ENCODE measurements at regions of chr10 and their contacts with region 1.

Region 1: DNA sequence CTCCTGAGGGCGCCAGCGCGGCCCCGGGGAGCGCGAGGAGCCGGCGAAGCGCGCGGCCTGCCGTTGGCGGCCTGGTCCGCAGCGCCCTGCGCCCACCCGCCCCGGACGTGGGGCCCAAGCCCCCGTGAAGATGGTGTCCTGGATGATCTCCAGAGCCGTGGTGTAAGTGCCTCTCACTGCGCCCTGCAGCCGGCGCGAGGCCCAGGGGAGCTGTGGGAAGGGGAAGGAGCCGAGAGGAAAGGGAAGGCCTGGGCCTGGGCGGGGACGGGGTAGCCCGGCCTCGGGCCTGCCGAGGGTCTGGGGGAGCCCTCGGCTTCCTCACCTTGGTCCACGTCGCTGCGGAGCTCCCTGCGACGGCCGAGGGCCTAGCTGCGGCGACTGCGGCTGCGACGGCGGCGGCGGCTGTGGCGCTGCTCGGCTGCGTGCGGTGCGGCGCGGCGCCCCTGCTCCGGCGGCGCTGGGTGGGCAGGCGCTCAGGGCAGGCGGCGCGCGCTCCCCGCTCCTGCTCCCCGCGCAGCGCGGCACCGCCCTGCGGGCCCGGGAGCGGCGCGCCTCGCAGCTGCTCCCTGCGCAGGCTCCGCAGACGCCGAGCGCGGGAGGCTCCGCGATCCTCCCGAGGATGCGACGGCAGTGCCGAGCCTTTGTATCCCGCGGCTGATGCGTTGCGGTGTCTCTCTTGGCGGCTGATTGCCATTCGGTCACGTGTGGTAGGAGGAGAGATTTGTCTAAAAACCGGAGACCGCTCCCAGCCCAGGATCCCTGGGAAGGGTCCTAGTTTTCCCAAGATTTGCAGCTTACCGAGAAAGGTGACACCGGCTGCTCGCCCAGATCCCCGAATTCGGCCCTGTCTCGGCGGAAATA is 445 bp downstream of the REEP3 start:
- DNase-seq: no peak
- H3K4me3 ChIP-seq: peak overlapping the region; percentile 81 to 91 (median 88)
- H3K27ac ChIP-seq: peak overlapping the region; percentile 99 to 100 (median 99)
- H3K4me1 ChIP-seq: peaks cover 42 to 74% (median 71%) of the 10 kb centered on the region in 4 donors
- H3K27me3 ChIP-seq: no peaks in the 10 kb centered on the region
- CTCF ChIP-seq: peak in 1 of 3 experiments; percentile 5
- EP300 ChIP-seq: no peak
- POLR2A ChIP-seq: no peak

Region 2: DNA sequence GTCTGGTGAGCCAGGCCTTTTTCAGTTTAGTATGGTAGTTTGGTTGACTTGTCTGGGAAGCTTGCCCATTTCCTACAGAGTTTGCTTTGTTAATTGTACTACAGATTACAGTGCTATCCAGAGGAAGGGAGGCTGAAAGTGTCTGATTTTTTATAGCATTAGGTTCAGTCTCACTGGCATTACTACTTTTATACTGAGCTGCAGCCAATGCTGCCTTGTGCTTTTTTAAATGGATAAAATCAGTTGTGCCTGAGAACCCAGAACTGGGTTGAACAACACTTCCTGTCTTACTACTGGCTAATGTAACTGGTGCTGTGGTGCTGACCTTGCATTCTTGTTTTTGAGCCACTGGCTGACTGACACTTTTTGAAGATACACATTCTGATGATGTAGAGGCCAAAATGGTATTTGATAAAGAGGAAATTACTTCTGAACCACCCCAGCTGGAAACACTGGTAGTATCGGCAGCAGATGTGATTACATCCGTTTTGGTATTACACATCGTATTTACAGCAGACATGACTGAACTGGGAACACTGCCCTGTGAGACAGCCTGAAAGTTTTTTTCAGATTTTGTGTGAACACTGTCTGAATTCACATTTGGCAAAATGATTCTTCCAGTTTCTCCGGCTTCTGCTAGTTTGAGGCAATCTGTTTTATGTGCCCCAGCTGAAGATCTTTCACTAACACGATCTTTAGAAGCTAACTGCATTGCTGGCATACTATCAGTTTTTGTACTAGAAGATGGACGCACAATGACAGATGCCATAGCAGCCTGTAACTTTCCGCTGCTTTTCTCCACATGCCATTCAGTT is 314.4 kb before region 1 on chr10:
- intact Hi-C with region 1: loop called (anchors 5 kb)
- DNase-seq: no peak
- H3K4me3 ChIP-seq: peak overlapping the region; percentile 4 to 34 (median 27)
- H3K27ac ChIP-seq: peak overlapping the region; percentile 56 to 77 (median 70)
- H3K4me1 ChIP-seq: peaks cover 52 to 65% (median 60%) of the 10 kb centered on the region in 4 donors
- H3K27me3 ChIP-seq: no peaks in the 10 kb centered on the region
- CTCF ChIP-seq: no peak
- EP300 ChIP-seq: no peak
- POLR2A ChIP-seq: no peak

Region 3: DNA sequence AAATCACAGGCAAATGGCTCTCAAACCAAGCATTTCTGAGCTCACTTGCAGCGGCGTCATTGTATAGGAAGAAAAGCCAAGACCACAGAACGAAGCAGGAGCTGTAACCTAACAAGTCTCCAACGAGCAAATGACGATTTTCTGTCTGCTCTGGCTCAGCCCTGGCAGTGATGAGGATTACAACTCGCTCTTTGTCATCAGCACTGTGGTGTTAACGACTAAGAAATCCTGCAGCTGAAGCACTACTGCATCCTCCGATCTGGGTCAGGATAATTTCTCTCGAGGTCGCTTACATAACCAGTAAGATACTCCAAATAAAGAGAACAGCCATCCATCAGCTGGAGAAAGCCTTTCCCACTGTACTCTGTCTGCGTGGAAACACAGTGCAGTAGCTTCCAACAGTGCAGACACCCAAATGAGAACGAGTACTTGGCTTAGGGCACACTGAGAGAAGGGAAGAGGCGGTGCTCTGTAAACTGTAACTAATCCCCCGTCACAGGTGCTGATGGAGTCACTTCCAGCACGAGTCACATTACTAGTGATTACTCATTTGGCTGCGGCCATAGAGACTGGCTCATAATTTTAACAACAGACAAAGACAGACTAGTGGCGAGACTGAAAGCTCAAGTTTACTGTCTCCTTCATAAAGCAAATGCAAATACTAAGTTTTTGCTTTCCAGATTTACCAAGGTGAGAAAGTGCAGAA is 252.7 kb before region 1 on chr10:
- intact Hi-C with region 1: loop called (anchors 5 kb)
- DNase-seq: peak; percentile 97
- H3K4me3 ChIP-seq: peak overlapping the region; percentile 46 to 61 (median 58)
- H3K27ac ChIP-seq: peak overlapping the region; percentile 81 to 88 (median 86)
- H3K4me1 ChIP-seq: peaks cover 24 to 37% (median 26%) of the 10 kb centered on the region in 4 donors
- H3K27me3 ChIP-seq: no peaks in the 10 kb centered on the region
- CTCF ChIP-seq: peak; percentile 32 to 44 (median 43)
- EP300 ChIP-seq: no peak
- POLR2A ChIP-seq: peak; percentile 70

Region 4: DNA sequence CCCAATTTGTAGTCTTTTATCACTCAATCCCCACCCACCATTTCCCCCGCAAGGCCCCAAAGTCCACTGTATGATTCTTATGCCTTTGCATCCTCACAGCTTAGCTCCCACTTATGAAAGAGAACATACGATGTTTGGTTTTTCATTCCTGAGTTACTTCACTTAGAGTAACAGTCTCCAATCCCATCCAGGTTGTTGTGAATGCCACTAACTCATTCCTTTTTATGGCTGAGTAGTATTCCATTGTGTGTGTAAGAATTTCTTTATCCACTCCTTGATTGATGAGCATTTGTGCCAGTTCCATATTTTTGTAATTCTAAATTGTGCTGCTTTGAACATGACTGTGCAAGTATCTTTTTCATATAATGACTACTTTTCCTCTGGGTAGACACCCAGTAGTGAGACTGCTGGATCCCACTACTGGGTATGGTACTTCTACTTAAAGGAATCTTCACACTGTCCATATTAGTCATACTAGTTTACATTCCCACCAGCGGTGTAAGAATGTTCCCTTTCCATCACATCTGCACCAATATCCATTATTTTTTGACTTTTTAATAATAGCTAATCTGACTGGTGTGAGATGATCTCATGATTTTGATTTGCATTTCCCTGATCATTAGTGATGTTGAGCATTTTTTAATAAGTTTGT is 208.5 kb before region 1 on chr10:
- intact Hi-C with region 1: no loop called
- DNase-seq: no peak
- H3K4me3 ChIP-seq: no peak overlapping the region
- H3K27ac ChIP-seq: no peak overlapping the region
- H3K4me1 ChIP-seq: peaks cover 8 to 16% (median 12%) of the 10 kb centered on the region in 4 donors
- H3K27me3 ChIP-seq: no peaks in the 10 kb centered on the region
- CTCF ChIP-seq: no peak
- EP300 ChIP-seq: no peak
- POLR2A ChIP-seq: no peak

Region 5: DNA sequence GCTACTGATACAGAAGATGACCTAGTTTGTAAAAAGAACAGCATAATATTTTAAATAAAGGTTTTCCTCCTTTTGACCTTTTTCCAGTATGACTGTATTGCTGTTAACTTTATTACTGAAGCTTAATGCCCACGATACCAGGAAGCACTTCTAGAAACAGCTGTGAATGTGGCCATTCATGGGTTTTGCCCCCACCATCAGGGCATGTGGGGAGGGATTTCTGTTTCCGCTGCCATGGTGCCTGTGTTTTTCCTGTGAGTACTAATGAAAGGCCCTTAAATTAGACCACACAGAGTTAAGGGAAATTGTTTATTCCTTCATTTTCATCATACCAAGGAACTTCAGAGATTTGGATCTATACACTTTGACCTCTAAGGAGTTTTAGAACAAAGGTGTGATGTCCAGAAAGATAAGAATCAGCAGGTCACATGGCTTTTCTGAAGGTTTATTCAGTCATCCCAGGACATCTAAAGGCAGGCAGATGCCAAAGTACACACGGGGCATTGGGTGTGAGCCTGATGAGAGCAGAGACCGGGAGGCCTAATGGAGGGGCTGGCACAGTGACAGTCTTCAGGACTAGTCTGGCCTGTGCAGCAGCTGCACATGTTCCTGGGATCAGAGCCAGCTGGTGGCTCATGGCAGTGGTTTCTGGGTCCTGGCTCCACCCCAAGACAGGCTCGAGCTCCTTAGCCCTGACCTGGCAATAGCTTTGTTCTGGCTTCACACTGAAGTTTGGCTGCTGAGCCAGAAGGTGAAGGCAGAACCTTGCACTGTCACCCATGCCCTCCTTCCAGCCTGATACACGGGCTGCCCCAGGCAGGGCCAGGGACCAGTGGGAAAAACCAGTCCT is 190.4 kb after region 1 on chr10:
- intact Hi-C with region 1: loop called (anchors 5 kb)
- DNase-seq: peak; percentile 96
- H3K4me3 ChIP-seq: peak overlapping the region in 1 of 4 donors; percentile 3
- H3K27ac ChIP-seq: peak overlapping the region; percentile 80 to 89 (median 84)
- H3K4me1 ChIP-seq: peaks cover 49 to 54% (median 51%) of the 10 kb centered on the region in 4 donors
- H3K27me3 ChIP-seq: no peaks in the 10 kb centered on the region
- CTCF ChIP-seq: no peak
- EP300 ChIP-seq: no peak
- POLR2A ChIP-seq: no peak

Measured in esophagus muscularis mucosa (tissue), 4 donors.